Mucosa of descending colon (tissue), 3 donors: ENCODE measurements at regions of chr9 and their contacts with region 1.

Region 1: GRCh38 chr9:125631391-125632085 is 75.5 kb downstream of the MAPKAP1 start:
- DNase-seq: peak in 1 of 3 donors; percentile 66
- ATAC-seq: peak; percentile 84
- H3K4me3 ChIP-seq: no peak overlapping the region
- H3K4me1 ChIP-seq: peaks cover 17% of the 10 kb centered on the region
- CTCF ChIP-seq: peak; percentile 9

Region 2: GRCh38 chr9:125558453-125559092 is 73.0 kb before region 1 on chr9:
- intact Hi-C with region 1: loop called (anchors 5 to 10 kb)
- DNase-seq: peak in 1 of 3 donors; percentile 84
- ATAC-seq: peak; percentile 90
- H3K4me3 ChIP-seq: no peak overlapping the region
- H3K4me1 ChIP-seq: no peaks in the 10 kb centered on the region
- CTCF ChIP-seq: peak; percentile 37

Region 3: DNA sequence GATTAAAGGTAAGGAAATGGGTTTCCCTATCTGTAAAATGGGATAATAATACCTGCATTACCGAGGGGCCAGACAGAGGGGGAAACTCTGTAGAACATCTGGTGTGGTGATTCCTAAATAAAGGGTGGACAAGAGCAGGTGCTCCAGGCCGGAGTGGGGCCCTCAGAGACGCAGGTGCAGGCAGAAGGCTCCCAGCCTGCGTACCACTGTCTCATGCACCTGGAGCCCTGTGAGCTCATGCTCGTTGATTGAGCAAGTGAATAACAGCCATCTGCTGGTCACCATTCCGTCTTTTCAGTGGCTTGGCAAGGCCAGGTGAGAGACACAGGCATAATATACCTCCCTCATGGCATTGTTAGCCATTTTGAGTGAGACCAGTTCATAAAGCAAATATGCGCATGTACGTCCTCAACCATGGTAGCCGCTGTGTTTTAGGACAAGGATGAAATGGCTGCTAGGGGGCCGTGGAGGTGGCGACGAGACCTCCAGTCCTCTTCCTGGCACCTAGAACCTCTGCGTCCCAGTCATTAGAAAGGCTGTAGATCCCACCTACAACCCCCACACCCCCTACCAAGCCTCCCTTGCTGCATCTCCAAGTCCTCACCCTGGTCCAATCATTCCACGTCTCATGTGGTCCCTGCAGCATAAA is 497.1 kb after region 1 on chr9:
- intact Hi-C with region 1: no loop called
- DNase-seq: no peak
- ATAC-seq: no peak
- H3K4me3 ChIP-seq: no peak overlapping the region
- H3K4me1 ChIP-seq: no peaks in the 10 kb centered on the region
- CTCF ChIP-seq: no peak